CD4-positive, alpha-beta memory T cell (primary cell): ENCODE measurements at regions of chr11 and their contacts with region 1.

Region 1: GRCh38 chr11:113314389-113315301 is at the start of gene TTC12:
- DNase-seq: peak; percentile 87 to 91 (median 89)
- H3K4me3 ChIP-seq: peak within 1 kb of the TSS; percentile 24 to 84
- H3K4me3 Mint-ChIP-seq: peak within 1 kb of the TSS; percentile 79 to 91 (median 88)
- H3K27ac ChIP-seq: peak within 1 kb of the TSS; percentile 85
- H3K27ac Mint-ChIP-seq: peak within 1 kb of the TSS; percentile 79 to 95 (median 94)
- H3K4me1 ChIP-seq: peaks cover 20% of the 10 kb centered on the region
- H3K4me1 Mint-ChIP-seq: peaks cover 27 to 52% (median 38%) of the 10 kb centered on the region in 4 donors
- H3K27me3 ChIP-seq: no peaks in the 10 kb centered on the region
- H3K27me3 Mint-ChIP-seq: no peaks in the 10 kb centered on the region
- total RNA-seq, gene TTC12: 69.2 to 75.1 TPM

Region 2: GRCh38 chr11:112226062-112226830 is 1088.4 kb before region 1 on chr11 and contains the start of gene PTS:
- CTCF ChIA-PET with region 1: no interaction called
- POLR2A ChIA-PET with region 1: interaction called, 4 read pairs
- intact Hi-C with region 1: loop called (anchors 5 kb)
- DNase-seq: peak; percentile 81 to 91 (median 88)
- H3K4me3 ChIP-seq: peak within 1 kb of the TSS; percentile 98 to 100
- H3K4me3 Mint-ChIP-seq: peak within 1 kb of the TSS; percentile 92 to 96 (median 94)
- H3K27ac ChIP-seq: peak within 1 kb of the TSS; percentile 98
- H3K27ac Mint-ChIP-seq: peak within 1 kb of the TSS; percentile 96 to 99 (median 99)
- H3K4me1 ChIP-seq: peaks cover 15% of the 10 kb centered on the region
- H3K4me1 Mint-ChIP-seq: peaks cover 19 to 32% (median 22%) of the 10 kb centered on the region in 4 donors
- H3K27me3 ChIP-seq: no peaks in the 10 kb centered on the region
- H3K27me3 Mint-ChIP-seq: no peaks in the 10 kb centered on the region
- total RNA-seq, gene PTS: 23.6 to 26.9 TPM

Region 3: GRCh38 chr11:113261709-113262475 is 52.8 kb before region 1 on chr11:
- CTCF ChIA-PET with region 1: no interaction called
- POLR2A ChIA-PET with region 1: no interaction called
- intact Hi-C with region 1: no loop called
- DNase-seq: no peak
- H3K4me3 ChIP-seq: no peak overlapping the region
- H3K4me3 Mint-ChIP-seq: no peak overlapping the region
- H3K27ac ChIP-seq: no peak overlapping the region
- H3K27ac Mint-ChIP-seq: no peak overlapping the region
- H3K4me1 ChIP-seq: no peaks in the 10 kb centered on the region
- H3K4me1 Mint-ChIP-seq: peaks cover 0 to 3% (median 0%) of the 10 kb centered on the region in 4 donors
- H3K27me3 ChIP-seq: no peaks in the 10 kb centered on the region
- H3K27me3 Mint-ChIP-seq: peaks cover 8% of the 10 kb centered on the region in 2 donors

Region 4: GRCh38 chr11:113274713-113275582 is 39.7 kb before region 1 on chr11:
- CTCF ChIA-PET with region 1: no interaction called
- POLR2A ChIA-PET with region 1: no interaction called
- intact Hi-C with region 1: no loop called
- DNase-seq: no peak
- H3K4me3 ChIP-seq: no peak overlapping the region
- H3K4me3 Mint-ChIP-seq: no peak overlapping the region
- H3K27ac ChIP-seq: no peak overlapping the region
- H3K27ac Mint-ChIP-seq: no peak overlapping the region
- H3K4me1 ChIP-seq: no peaks in the 10 kb centered on the region
- H3K4me1 Mint-ChIP-seq: no peaks in the 10 kb centered on the region
- H3K27me3 ChIP-seq: no peaks in the 10 kb centered on the region
- H3K27me3 Mint-ChIP-seq: peaks cover 2 to 6% of the 10 kb centered on the region in 2 donors

Region 5: DNA sequence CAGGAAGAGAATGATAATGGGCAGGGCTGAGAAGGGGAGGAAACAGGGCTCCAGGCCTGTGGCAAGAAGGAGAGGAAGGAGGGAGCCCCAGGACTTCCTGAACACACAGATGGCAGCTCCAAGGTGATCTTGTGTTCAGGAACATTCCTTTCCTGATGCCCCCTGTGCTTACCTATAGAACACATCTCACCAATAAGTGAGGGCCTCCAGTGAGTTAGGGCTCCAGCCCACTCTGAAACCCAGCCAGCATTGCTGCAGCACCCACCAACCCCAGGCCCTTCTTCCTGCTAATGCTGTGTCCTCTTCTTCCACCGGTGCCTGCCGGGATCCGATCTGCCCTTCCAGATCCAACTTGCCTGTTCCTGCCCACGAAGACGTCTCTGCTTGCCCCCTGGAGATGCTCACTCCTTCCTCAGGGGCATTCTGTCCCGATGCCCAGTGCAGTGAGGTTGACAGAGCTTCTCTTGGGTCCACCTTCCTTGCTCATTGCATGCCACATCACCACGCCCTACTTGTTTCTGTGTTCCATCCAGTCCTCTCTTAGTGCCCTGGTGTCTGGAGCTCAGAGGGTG is 90.3 kb after region 1 on chr11:
- CTCF ChIA-PET with region 1: no interaction called
- POLR2A ChIA-PET with region 1: no interaction called
- intact Hi-C with region 1: no loop called
- DNase-seq: no peak
- H3K4me3 ChIP-seq: no peak overlapping the region
- H3K4me3 Mint-ChIP-seq: no peak overlapping the region
- H3K27ac ChIP-seq: no peak overlapping the region
- H3K27ac Mint-ChIP-seq: peak overlapping the region in 1 of 7 donors; percentile 37
- H3K4me1 ChIP-seq: no peaks in the 10 kb centered on the region
- H3K4me1 Mint-ChIP-seq: peaks cover 0 to 1% (median 0%) of the 10 kb centered on the region in 4 donors
- H3K27me3 ChIP-seq: no peaks in the 10 kb centered on the region
- H3K27me3 Mint-ChIP-seq: peaks cover 0 to 2% of the 10 kb centered on the region in 2 donors

Region 6: DNA sequence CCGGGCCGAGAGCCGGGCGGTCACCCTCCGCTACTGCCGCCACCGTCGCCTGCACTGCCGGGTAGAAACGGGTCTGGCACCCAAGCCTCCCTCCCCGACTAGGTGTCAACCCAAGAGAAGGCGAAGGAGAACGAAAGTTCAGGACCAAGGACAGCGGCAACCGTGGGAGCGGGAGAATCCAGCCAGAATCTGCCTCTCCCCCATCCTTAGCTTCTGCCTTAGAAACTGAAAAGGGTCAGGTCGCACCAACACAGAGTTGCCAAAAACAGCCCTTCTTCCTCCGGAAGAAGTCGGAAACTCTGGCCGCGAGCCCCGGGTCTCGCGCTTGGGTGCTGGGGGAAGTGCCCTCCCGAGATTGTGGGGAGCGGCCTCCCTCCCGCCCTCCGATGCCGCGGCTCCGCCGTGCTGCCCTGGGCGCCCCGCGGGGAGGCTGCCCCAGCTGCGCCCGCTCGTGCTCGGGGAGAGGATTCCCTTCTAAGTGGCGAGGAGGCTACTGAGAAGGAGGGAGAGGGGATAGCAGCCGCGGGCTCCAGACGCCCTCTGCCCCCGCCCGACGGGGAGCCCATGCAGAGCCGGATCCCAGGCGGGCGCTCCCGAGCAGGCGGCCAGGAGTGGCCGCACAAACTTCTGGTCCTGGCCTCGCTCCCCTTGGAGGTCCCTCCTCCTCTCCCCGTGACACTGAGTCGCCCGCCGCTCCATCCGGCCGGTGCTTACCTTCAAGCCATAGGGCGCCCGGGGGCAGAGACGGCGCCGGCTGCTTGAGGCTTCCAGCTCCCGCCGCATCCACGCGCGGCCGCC is 159.9 kb after region 1 on chr11:
- CTCF ChIA-PET with region 1: no interaction called
- POLR2A ChIA-PET with region 1: no interaction called
- intact Hi-C with region 1: no loop called
- DNase-seq: peak in 4 of 5 donors; percentile 10 to 26 (median 24)
- H3K4me3 ChIP-seq: no peak overlapping the region
- H3K4me3 Mint-ChIP-seq: peak overlapping the region in 2 of 8 donors; percentile 40 to 63
- H3K27ac ChIP-seq: no peak overlapping the region
- H3K27ac Mint-ChIP-seq: no peak overlapping the region
- H3K4me1 ChIP-seq: no peaks in the 10 kb centered on the region
- H3K4me1 Mint-ChIP-seq: peaks cover 0 to 13% (median 4%) of the 10 kb centered on the region in 4 donors
- H3K27me3 ChIP-seq: peaks cover 15% of the 10 kb centered on the region
- H3K27me3 Mint-ChIP-seq: peaks cover 42 to 59% of the 10 kb centered on the region in 2 donors

Region 7: GRCh38 chr11:113773416-113774173 is 458.9 kb after region 1 on chr11 and contains the start of gene ZW10:
- CTCF ChIA-PET with region 1: no interaction called
- POLR2A ChIA-PET with region 1: no interaction called
- intact Hi-C with region 1: loop called (anchors 2 kb)
- DNase-seq: peak; percentile 90 to 92 (median 92)
- H3K4me3 ChIP-seq: peak within 1 kb of the TSS; percentile 64 to 91
- H3K4me3 Mint-ChIP-seq: peak within 1 kb of the TSS; percentile 89 to 99 (median 98)
- H3K27ac ChIP-seq: peak within 1 kb of the TSS; percentile 62
- H3K27ac Mint-ChIP-seq: peak within 1 kb of the TSS; percentile 88 to 98 (median 96)
- H3K4me1 ChIP-seq: peaks cover 19% of the 10 kb centered on the region
- H3K4me1 Mint-ChIP-seq: peaks cover 12 to 31% (median 22%) of the 10 kb centered on the region in 4 donors
- H3K27me3 ChIP-seq: no peaks in the 10 kb centered on the region
- H3K27me3 Mint-ChIP-seq: peaks cover 0 to 3% of the 10 kb centered on the region in 2 donors
- total RNA-seq, gene ZW10: 8.7 to 9.7 TPM

Region 8: GRCh38 chr11:113875234-113876073 is 560.8 kb after region 1 on chr11 and contains the start of gene USP28:
- CTCF ChIA-PET with region 1: no interaction called
- POLR2A ChIA-PET with region 1: no interaction called
- intact Hi-C with region 1: loop called (anchors 5 kb)
- DNase-seq: peak; percentile 71 to 84 (median 76)
- H3K4me3 ChIP-seq: peak within 1 kb of the TSS; percentile 48 to 78
- H3K4me3 Mint-ChIP-seq: peak within 1 kb of the TSS; percentile 98 to 100 (median 99)
- H3K27ac ChIP-seq: peak within 1 kb of the TSS; percentile 68
- H3K27ac Mint-ChIP-seq: peak within 1 kb of the TSS; percentile 91 to 99 (median 98)
- H3K4me1 ChIP-seq: peaks cover 24% of the 10 kb centered on the region
- H3K4me1 Mint-ChIP-seq: peaks cover 23 to 55% (median 40%) of the 10 kb centered on the region in 4 donors
- H3K27me3 ChIP-seq: no peaks in the 10 kb centered on the region
- H3K27me3 Mint-ChIP-seq: no peaks in the 10 kb centered on the region
- total RNA-seq, gene USP28: 17.2 to 17.3 TPM